ENCODE measurements at regions of chr10 and their contacts with region 1.

Region 1: DNA sequence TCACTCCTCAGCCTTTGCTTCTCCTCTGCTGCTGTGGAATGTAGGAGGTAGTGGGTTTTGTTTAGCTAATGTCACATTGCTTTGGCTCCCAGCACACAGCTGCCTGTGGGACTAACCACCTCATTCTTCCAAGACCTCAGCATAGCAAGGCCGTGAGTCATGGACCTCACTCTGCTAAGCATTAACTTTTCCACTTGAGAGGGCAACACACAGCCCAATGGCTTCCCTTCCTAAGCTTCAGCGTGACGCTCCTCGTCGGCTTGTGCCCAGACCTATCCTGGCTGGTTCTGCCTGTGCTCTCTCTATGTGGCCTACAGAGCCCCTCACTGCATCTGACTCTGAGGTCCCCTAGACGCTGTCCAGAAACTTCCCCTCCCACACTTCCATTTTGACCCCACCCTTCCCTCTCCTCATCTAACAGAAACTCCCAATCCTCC is 23.3 kb downstream of the MYOF start:
- DNase-seq: no peak
- H3K4me3 ChIP-seq: no peak overlapping the region
- H3K27ac ChIP-seq: no peak overlapping the region
- H3K4me1 ChIP-seq: peaks cover 0 to 5% (median 2%) of the 10 kb centered on the region in 4 experiments; a peak in 3 of 7 replicates
- H3K27me3 ChIP-seq: no peaks in the 10 kb centered on the region
- CTCF ChIP-seq: no peak
- EP300 ChIP-seq: no peak
- POLR2A ChIP-seq: no peak
- RAD21 ChIP-seq: no peak

Region 2: DNA sequence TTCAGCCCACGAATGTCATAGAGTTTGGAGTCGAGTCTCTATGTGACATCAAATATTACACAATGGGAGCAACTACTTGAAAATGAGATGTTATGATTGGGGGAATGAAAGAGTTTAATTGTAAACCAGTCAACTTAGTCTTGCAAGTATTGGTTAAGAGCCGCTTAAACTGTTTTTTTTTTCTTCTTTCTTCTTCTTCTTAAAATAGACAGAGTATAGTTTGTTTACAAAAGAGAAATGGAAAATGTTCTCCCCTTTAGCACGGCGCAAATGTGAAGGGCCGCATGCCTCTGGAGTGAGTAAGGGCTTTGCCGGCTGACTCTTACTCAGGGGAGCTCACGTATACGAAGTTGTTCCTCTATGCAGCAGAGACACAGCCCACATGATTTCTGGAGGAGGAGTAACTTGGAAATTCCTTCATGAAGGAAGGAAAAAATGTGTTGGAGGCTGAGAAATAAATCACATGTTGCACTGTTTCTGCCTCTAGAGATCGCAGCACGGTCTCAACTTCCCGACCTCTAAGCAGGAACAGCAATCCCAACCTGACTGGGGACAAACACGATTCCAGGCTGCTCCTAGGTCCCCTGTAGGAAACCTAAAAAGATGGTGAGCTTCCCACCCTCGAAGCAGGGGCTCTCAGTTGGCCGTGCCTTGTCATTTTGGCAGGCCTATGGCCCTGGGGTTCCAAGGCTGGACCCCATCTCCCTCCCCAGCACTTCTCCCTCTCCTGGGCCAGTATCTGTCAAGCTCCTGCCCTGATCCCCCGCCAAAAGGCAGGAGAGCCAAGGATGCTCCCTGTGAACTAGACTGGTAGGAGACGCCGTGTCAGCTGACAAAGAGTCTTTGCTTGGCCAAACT is 21.5 kb before region 1 on chr10:
- CTCF ChIA-PET with region 1: interaction called, 9 read pairs
- POLR2A ChIA-PET with region 1: interaction called, 12 read pairs
- DNase-seq: peak in 1 of 2 experiments; percentile 68
- H3K4me3 ChIP-seq: peak overlapping the region in 3 of 4 experiments; percentile 20 to 52 (median 31); a peak in 3 of 8 replicates
- H3K27ac ChIP-seq: peak overlapping the region; percentile 74
- H3K4me1 ChIP-seq: peaks cover 21 to 37% (median 34%) of the 10 kb centered on the region in 4 experiments
- H3K27me3 ChIP-seq: no peaks in the 10 kb centered on the region
- CTCF ChIP-seq: no peak
- EP300 ChIP-seq: peak in 1 of 2 experiments; percentile 52; a peak in 1 of 3 replicates
- POLR2A ChIP-seq: peak; percentile 48 to 75
- RAD21 ChIP-seq: no peak

Region 3: GRCh38 chr10:93445097-93445960 is 13.5 kb before region 1 on chr10:
- CTCF ChIA-PET with region 1: interaction called, 20 read pairs
- POLR2A ChIA-PET with region 1: interaction called, 16 read pairs
- DNase-seq: peak; percentile 84 to 88
- H3K4me3 ChIP-seq: peak overlapping the region in 2 of 4 experiments; percentile 7 to 29; a peak in 2 of 8 replicates
- H3K27ac ChIP-seq: peak overlapping the region; percentile 83
- H3K4me1 ChIP-seq: peaks cover 8 to 22% (median 10%) of the 10 kb centered on the region in 4 experiments; a peak in 6 of 7 replicates
- H3K27me3 ChIP-seq: no peaks in the 10 kb centered on the region
- CTCF ChIP-seq: no peak
- EP300 ChIP-seq: peak; percentile 19 to 94; a peak in 2 of 3 replicates
- POLR2A ChIP-seq: peak; percentile 55 to 78
- RAD21 ChIP-seq: peak in 1 of 2 experiments; percentile 21; a peak in 1 of 4 replicates

Measured in H1 (cell line).